ENCODE measurements at regions of chr12 and their contacts with region 1.

Region 1: GRCh38 chr12:101280006-101280505 is at the start of gene UTP20:
- DNase-seq: peak; percentile 59 to 96
- H3K4me3 ChIP-seq: peak within 1 kb of the TSS; percentile 80 to 100 (median 98)
- H3K27ac ChIP-seq: peak within 1 kb of the TSS; percentile 78
- H3K4me1 ChIP-seq: no peaks in the 10 kb centered on the region
- H3K27me3 ChIP-seq: no peaks in the 10 kb centered on the region
- CTCF ChIP-seq: no peak
- EP300 ChIP-seq: no peak
- POLR2A ChIP-seq: peak; percentile 56 to 93
- RAD21 ChIP-seq: no peak
- total RNA-seq, gene UTP20: 43.7 and 48.4 TPM in 2 replicates

Region 2: GRCh38 chr12:101172316-101172715 is 107.7 kb before region 1 on chr12:
- CTCF ChIA-PET with region 1: interaction called, 10 read pairs
- POLR2A ChIA-PET with region 1: interaction called, 3 read pairs
- DNase-seq: peak; percentile 47 to 69
- H3K4me3 ChIP-seq: no peak overlapping the region
- H3K27ac ChIP-seq: no peak overlapping the region
- H3K4me1 ChIP-seq: no peaks in the 10 kb centered on the region
- H3K27me3 ChIP-seq: no peaks in the 10 kb centered on the region
- CTCF ChIP-seq: peak; percentile 82 to 94 (median 86)
- EP300 ChIP-seq: no peak
- POLR2A ChIP-seq: no peak
- RAD21 ChIP-seq: peak; percentile 93 to 96

Measured in H1 (cell line).